Activated CD4-positive, alpha-beta T cell treated with anti-CD3 and anti-CD28 coated beads for 36 hours (primary cell): ENCODE measurements at regions of chr2 and their contacts with region 1.

Region 1: DNA sequence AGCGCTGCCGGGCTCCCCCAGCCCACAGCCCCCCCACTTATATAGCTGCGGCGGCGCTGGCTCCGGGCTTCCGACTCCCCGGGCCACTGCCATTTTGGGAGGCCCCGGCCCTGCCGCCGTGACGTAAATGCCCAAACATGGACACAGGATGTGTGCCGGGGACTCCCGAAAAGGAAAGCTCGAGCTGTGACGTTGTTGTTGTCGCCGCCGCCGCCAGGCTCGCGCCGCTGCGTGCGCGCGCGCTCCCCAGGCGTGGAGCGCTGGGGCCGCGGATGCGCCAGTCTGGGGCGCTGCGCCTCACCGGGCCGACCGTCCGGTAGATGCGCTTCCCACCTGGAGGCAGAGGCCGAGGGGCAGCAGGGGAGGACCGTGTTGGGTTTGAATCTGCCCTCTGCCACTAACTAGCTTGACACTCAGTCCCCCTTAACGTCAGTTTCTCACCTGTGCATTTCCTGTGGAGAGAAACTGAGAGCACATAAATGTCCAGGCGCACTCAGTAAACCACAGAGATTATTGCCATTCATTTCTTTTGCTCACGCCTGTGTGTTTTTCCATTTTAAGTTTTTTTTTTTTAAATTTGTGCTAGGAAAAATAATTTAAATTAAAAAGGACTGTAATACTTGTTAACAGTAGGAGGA is at the start of gene EGR4:
- DNase-seq: peak; percentile 95
- ATAC-seq: peak; percentile 96
- H3K4me3 Mint-ChIP-seq: peak within 1 kb of the TSS; percentile 68
- H3K27ac Mint-ChIP-seq: no peak within 1 kb of the TSS
- H3K4me1 Mint-ChIP-seq: peaks cover 12% of the 10 kb centered on the region
- H3K27me3 Mint-ChIP-seq: peaks cover 65% of the 10 kb centered on the region
- total RNA-seq, gene EGR4: 0.18 to 0.41 TPM

Region 2: DNA sequence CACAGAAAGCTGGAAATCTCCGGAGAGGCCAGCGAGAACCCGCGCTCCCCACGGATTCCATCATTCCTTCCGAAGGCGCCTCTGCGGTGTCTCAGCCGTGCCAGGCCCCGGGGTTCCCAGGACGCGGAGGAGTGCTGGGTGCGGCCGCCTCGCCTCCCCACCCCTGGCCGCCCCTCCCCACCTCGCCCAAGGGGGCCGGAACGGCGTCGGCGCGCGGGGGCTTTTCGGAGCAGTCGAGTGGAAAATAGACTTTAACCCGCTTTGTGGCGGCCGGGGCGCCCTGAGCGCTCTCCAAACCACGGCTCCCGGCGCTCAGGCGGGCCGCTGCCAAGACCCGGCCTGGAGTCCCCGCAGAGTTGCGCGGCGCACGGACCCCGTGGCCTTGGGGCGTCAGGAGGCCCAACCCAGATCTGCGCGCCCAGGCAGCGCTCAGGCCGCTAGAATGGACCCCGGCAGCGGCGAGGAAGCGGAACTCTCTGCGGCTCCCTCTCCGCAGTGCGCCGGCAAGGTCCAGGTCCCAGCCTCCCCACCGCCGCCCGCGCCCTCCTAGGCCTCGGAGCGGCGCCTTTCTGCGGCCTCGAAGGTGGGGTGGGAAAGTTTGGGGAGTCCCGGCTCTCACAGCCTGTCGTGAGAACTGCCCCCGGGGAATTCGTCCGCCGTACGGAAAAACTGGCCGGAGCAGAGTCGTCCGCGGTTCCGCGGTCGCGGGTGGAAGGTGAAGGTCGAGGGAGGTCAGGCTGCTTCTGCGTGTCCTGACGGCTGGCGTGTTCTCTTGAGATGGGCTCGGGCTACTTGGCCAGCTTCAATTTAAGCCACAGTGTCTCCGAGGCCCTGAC is 377.5 kb before region 1 on chr2:
- CTCF ChIA-PET with region 1: no interaction called
- POLR2A ChIA-PET with region 1: no interaction called
- intact Hi-C with region 1: loop called in 1 of 2 experiments (anchors 2 kb)
- DNase-seq: peak; percentile 74
- ATAC-seq: peak; percentile 60
- H3K4me3 Mint-ChIP-seq: peak overlapping the region; percentile 64
- H3K27ac Mint-ChIP-seq: no peak overlapping the region
- H3K4me1 Mint-ChIP-seq: peaks cover 30% of the 10 kb centered on the region
- H3K27me3 Mint-ChIP-seq: peaks cover 71% of the 10 kb centered on the region

Region 3: GRCh38 chr2:73112913-73113633 is 180.6 kb before region 1 on chr2 and contains the start of gene RAB11FIP5:
- CTCF ChIA-PET with region 1: no interaction called
- POLR2A ChIA-PET with region 1: no interaction called
- intact Hi-C with region 1: loop called in 1 of 2 experiments (anchors 5 kb)
- DNase-seq: peak; percentile 87
- ATAC-seq: peak; percentile 84
- H3K4me3 Mint-ChIP-seq: peak within 1 kb of the TSS; percentile 79
- H3K27ac Mint-ChIP-seq: peak within 1 kb of the TSS; percentile 40
- H3K4me1 Mint-ChIP-seq: peaks cover 23% of the 10 kb centered on the region
- H3K27me3 Mint-ChIP-seq: peaks cover 2% of the 10 kb centered on the region
- total RNA-seq, gene RAB11FIP5: 16.4 to 16.5 TPM

Region 4: GRCh38 chr2:73268830-73269685 is 24.6 kb before region 1 on chr2:
- CTCF ChIA-PET with region 1: interaction called, 7 read pairs
- POLR2A ChIA-PET with region 1: no interaction called
- intact Hi-C with region 1: loop called in 1 of 2 experiments (anchors 1 kb)
- DNase-seq: peak; percentile 86
- ATAC-seq: peak; percentile 95
- H3K4me3 Mint-ChIP-seq: peak overlapping the region; percentile 18
- H3K27ac Mint-ChIP-seq: no peak overlapping the region
- H3K4me1 Mint-ChIP-seq: peaks cover 21% of the 10 kb centered on the region
- H3K27me3 Mint-ChIP-seq: no peaks in the 10 kb centered on the region

Region 5: DNA sequence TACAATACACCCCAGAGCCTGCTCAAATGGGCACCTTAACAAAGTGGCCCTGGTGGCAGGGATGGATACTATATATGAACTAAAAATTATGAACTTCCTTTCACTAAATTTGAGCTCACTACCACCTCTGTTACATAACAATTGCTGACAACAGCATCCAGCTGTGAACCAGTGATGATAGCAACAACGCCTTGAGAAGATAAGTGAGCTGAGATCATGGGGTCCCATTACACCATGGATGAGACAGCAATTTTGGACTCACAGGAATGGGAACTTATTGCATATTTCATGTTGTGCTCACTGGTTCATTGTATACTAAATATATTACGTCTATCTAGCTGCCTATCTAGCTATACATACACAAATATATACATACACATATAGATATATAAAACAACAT is 75.1 kb after region 1 on chr2:
- CTCF ChIA-PET with region 1: no interaction called
- POLR2A ChIA-PET with region 1: no interaction called
- intact Hi-C with region 1: no loop called
- DNase-seq: no peak
- ATAC-seq: no peak
- H3K4me3 Mint-ChIP-seq: no peak overlapping the region
- H3K27ac Mint-ChIP-seq: no peak overlapping the region
- H3K4me1 Mint-ChIP-seq: no peaks in the 10 kb centered on the region
- H3K27me3 Mint-ChIP-seq: peaks cover 5% of the 10 kb centered on the region

Region 6: DNA sequence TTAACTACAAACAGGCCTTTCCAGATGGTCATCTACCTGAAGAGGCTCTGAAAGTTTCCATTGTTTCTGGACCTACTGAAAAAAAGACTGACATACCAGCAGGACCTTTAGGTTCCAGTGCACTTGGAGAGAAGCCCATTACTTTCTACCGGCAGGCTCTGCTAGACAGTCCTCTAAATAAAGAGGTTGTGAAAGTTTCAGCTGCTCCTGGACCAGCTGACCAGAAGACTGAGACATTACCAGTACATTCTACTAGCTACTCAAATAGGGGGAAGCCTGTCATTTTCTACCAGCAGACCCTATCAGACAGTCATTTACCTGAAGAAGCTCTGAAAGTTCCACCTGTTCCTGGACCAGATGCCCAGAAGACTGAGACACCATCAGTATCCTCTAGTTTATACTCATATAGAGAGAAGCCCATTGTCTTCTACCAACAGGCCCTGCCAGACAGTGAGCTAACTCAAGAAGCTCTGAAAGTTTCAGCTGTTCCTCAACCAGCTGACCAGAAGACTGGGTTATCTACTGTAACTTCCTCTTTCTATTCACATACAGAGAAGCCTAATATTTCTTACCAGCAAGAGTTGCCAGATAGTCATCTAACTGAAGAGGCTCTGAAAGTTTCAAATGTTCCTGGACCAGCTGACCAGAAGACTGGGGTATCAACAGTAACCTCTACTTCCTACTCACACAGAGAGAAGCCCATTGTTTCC is 157.8 kb after region 1 on chr2:
- CTCF ChIA-PET with region 1: no interaction called
- POLR2A ChIA-PET with region 1: interaction called, 14 read pairs
- intact Hi-C with region 1: no loop called
- DNase-seq: no peak
- ATAC-seq: no peak
- H3K4me3 Mint-ChIP-seq: no peak overlapping the region
- H3K27ac Mint-ChIP-seq: no peak overlapping the region
- H3K4me1 Mint-ChIP-seq: no peaks in the 10 kb centered on the region
- H3K27me3 Mint-ChIP-seq: no peaks in the 10 kb centered on the region